KBM-7 (cell line): ENCODE measurements at regions of chr1 and their contacts with region 1.

Region 1: GRCh38 chr1:89804642-89805237 is 16.1 kb upstream of the LRRC8D start:
- DNase-seq: peak; percentile 92

Region 2: DNA sequence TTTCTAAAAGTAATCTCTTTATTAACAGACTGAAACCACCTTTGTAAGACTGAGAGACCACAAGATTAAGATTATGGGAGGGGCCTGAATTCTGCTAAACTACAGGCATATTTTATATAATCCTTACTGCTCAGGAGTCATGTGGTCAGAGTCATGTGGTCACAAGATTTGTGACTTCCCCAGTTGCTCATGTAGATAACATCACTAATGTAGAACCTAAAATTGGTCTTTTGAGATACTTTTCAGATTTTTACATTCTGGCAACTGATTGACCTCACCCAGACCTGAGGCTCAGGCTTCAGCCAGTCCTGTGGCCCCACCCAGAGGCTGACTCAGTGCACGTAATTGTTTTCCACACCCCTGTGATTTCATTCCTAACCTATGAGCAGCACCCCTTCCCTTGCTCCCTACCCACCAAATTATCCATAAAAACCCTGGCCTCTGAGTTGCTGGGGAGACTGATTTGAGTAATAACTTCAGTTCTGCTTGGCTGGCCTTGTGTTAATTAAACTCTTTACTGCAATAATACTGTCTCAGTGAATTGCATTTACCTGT is 148.4 kb after region 1 on chr1:
- in situ Hi-C with region 1: loop called (anchors 25 kb)
- DNase-seq: peak; percentile 67

Region 3: DNA sequence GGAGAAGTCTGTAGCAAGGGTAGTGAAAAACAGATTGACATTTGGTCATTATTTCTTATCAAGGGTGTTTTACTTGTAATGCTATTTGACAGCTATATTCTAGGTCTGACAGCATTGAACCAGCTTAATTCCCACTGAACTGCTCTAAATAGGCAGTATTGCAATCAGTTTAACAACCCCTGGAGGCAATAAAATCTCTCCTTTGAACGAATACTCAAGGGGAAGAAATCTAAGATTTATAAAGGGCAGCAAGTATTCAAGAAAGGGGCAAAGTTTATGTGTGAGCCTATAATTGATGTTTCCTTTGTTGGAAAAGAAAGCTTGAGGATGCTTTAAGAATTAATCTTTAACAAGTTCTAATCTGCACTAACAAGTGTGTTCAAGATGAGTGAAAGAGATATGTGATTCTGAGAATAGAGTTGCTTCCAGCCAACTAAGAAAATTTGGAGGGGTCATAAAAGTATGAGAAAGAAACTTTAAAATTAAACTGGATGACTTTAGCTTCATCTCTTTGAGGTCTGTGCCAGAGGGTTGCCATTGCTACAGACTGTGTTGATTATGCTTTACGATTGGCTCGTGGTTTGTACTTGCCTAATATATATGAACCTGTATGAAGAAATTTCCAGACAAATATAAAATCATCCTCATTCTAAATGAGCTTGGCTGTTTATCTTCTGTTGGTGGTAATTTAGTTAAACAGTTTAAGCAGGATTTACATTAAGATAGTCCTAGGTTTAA is 262.6 kb after region 1 on chr1:
- in situ Hi-C with region 1: no loop called
- DNase-seq: no peak